ENCODE measurements at regions of chr14 and their contacts with region 1.

Region 1: GRCh38 chr14:29548948-29549370 is 378.7 kb downstream of the PRKD1 start:
- DNase-seq: peak; percentile 77
- ATAC-seq: peak; percentile 89
- H3K4me3 ChIP-seq: no peak overlapping the region
- H3K27ac ChIP-seq: no peak overlapping the region
- H3K4me1 ChIP-seq: no peaks in the 10 kb centered on the region
- H3K27me3 ChIP-seq: peaks cover 7% of the 10 kb centered on the region; the same call in 1 of the 2 replicates
- CTCF ChIP-seq: peak; percentile 71

Region 2: GRCh38 chr14:29475641-29476040 is 73.3 kb before region 1 on chr14:
- CTCF ChIA-PET with region 1: no interaction called
- POLR2A ChIA-PET with region 1: no interaction called
- intact Hi-C with region 1: no loop called
- DNase-seq: peak; percentile 8
- ATAC-seq: peak; percentile 38
- H3K4me3 ChIP-seq: no peak overlapping the region
- H3K27ac ChIP-seq: no peak overlapping the region
- H3K4me1 ChIP-seq: no peaks in the 10 kb centered on the region
- H3K27me3 ChIP-seq: 0 out of 2 replicates have a peak, but pooled peaks cover 7% of the 10 kb centered on the region
- CTCF ChIP-seq: no peak

Region 3: DNA sequence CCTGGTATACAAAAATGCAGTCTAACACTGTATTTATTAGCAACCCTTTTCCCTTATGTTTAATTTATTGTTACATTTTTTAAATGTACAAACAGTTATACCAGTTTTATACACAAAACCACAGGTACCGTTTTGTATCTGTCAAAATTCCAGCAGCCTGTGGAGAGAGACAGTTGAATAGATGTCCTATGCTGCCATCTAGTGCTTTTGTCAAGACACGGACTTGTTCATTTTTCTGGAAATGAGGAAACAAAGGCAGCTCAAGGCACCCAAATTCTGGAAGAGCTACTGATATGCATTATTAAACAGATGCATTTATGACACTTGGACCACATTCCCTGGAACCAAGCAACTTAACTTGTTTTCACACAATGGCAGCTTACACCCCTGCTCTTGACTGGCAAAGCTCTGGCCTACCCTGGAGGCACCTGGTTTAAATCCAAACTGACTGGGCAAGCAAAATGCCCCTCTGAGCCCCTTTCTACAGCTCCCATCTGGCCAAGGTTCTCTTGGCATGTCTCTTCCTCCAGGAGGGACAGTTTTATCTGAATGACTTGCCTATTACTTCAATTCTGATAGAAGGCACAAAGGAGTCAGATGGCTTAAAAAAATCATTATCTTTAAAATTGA is 665.6 kb after region 1 on chr14:
- CTCF ChIA-PET with region 1: interaction called, 5 read pairs
- POLR2A ChIA-PET with region 1: no interaction called
- intact Hi-C with region 1: loop called (anchors 1 kb)
- DNase-seq: peak; percentile 74
- ATAC-seq: peak; percentile 79
- H3K4me3 ChIP-seq: no peak overlapping the region
- H3K27ac ChIP-seq: no peak overlapping the region
- H3K4me1 ChIP-seq: no peaks in the 10 kb centered on the region
- H3K27me3 ChIP-seq: no peaks in the 10 kb centered on the region
- CTCF ChIP-seq: peak; percentile 89